WTC11 (cell line): ENCODE measurements at regions of chr1 and their contacts with region 1.

Region 1: GRCh38 chr1:9196129-9197040 is 38.2 kb upstream of the H6PD start:
- DNase-seq: peak; percentile 75
- ATAC-seq: peak; percentile 48
- H3K4me3 Mint-ChIP-seq: no peak overlapping the region
- H3K27ac Mint-ChIP-seq: no peak overlapping the region
- H3K4me1 Mint-ChIP-seq: peaks cover 16% of the 10 kb centered on the region
- H3K27me3 Mint-ChIP-seq: peaks cover 48% of the 10 kb centered on the region
- CTCF ChIP-seq: peak; percentile 40; the same call in 1 of the 2 replicates

Region 2: DNA sequence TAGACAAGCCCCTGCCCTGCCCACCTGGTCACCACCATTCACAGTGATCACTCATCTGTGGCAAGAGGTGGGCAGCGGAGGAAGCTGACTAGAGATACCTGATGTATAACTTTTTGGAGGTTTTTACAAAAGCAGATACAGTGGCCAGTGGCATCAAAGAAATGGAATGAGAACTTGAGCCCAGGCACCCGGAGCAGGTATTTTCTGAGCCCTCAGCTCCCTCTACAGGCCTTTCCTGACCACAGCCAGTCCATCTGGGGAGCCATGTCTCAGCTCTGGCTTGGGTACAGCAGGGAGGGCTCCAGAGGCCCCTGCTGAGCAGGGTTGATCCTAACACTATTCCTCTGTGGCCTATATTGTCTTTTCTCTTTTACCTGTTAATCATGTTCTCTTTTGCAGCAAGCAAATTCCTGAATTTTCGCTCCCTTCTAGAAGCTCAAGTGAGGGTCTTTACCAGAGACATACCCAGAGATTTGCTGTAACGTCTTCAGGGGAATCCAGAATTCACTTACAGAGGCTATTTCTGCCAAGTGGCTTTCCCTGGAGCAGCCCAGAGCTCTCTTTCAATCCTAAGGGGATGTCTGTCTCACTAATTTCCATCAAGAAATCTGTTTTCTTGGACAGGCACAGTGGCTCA is 94.8 kb before region 1 on chr1:
- CTCF ChIA-PET with region 1: interaction called, 11 read pairs
- POLR2A ChIA-PET with region 1: no interaction called
- DNase-seq: peak; percentile 68
- ATAC-seq: peak; percentile 96
- H3K4me3 Mint-ChIP-seq: no peak overlapping the region
- H3K27ac Mint-ChIP-seq: no peak overlapping the region
- H3K4me1 Mint-ChIP-seq: peaks cover 5% of the 10 kb centered on the region; the same call in 1 of the 2 replicates
- H3K27me3 Mint-ChIP-seq: no peaks in the 10 kb centered on the region; the same call in 1 of the 2 replicates
- CTCF ChIP-seq: peak; percentile 50; the same call in 1 of the 2 replicates

Region 3: DNA sequence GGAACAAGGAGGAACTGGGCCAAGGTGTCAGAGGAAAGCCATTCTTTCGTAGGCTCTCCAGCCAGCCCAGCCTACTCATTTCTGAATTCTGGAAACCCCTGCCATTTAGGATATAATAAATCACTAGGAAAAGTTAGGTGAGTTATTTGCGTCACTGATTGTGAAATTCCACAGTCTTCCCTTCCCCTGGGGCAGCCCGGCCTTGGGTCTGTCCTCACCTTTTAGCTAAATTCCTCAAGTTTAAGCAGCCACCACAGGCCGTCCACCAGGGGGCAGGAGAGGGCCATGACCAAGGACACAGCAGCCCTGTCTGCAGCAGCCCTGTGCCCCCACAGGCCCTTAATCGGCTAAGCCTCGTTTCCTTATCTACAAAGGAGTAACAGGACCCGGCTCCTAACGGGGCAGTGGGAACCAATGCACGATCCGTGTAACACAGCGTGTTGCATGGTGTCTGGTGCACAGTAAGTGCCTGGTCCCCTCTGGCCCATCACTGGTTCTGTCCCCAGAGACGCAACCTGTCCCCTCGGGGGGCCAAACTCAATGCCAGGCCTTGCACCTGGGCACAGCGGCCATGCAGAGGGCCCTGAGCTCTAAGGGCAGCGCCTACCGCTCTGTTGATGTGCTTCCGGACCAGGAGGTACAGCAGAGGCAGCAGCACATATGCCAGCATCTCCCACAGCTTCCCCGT is 85.6 kb before region 1 on chr1:
- CTCF ChIA-PET with region 1: interaction called, 31 read pairs
- POLR2A ChIA-PET with region 1: no interaction called
- DNase-seq: peak; percentile 98
- ATAC-seq: peak; percentile 96
- H3K4me3 Mint-ChIP-seq: no peak overlapping the region
- H3K27ac Mint-ChIP-seq: no peak overlapping the region
- H3K4me1 Mint-ChIP-seq: no peaks in the 10 kb centered on the region
- H3K27me3 Mint-ChIP-seq: no peaks in the 10 kb centered on the region
- CTCF ChIP-seq: peak; percentile 94

Region 4: DNA sequence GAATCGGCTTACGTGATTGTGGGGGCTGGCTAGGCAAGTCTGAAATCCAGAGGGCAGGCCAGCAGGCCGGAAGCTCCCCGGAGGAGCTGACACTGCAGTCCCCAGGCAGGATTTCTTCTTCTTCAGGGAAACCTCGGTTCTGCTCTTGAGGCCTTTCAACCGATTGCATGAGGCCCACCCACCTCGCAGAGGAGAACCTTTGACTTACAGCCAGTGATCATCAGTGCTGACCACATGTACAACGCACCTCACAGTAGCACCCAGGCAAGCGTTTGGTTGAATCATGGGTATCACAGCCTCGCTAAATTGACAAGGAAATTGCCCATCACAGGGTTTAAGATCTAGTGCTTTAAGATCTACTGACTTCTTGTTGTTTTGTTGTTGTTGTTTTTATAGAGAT is 43.9 kb before region 1 on chr1:
- CTCF ChIA-PET with region 1: no interaction called
- POLR2A ChIA-PET with region 1: no interaction called
- DNase-seq: no peak
- ATAC-seq: no peak
- H3K4me3 Mint-ChIP-seq: no peak overlapping the region
- H3K27ac Mint-ChIP-seq: peak overlapping the region; percentile 53
- H3K4me1 Mint-ChIP-seq: no peaks in the 10 kb centered on the region; the same call in 1 of the 2 replicates
- H3K27me3 Mint-ChIP-seq: no peaks in the 10 kb centered on the region
- CTCF ChIP-seq: no peak

Region 5: DNA sequence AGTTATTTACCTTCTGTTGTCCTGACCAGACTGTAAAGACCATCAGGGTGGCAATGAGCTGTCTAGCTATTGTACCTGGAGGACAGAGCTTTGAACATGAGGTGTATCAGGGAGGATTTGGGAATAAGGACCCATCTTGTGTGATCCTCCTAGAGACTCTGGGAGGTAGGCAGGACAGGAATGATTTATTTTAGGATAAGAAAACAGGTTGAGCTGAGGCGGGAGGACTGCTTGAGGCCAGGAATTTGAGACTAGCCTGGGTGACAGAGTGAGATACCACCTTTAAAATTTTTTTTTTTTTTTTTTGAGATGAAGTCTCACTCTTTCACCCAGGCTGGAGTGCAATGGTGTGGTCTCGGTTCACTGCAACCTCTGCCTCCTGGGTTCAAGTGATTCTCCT is 20.8 kb before region 1 on chr1:
- CTCF ChIA-PET with region 1: interaction called, 32 read pairs
- POLR2A ChIA-PET with region 1: no interaction called
- DNase-seq: no peak
- ATAC-seq: no peak
- H3K4me3 Mint-ChIP-seq: no peak overlapping the region
- H3K27ac Mint-ChIP-seq: peak overlapping the region; percentile 36; the same call in 1 of the 2 replicates
- H3K4me1 Mint-ChIP-seq: peaks cover 28% of the 10 kb centered on the region
- H3K27me3 Mint-ChIP-seq: no peaks in the 10 kb centered on the region; the same call in 1 of the 2 replicates
- CTCF ChIP-seq: no peak

Region 6: GRCh38 chr1:9181176-9181906 is 15.0 kb before region 1 on chr1:
- CTCF ChIA-PET with region 1: interaction called, 32 read pairs
- POLR2A ChIA-PET with region 1: interaction called, 4 read pairs
- DNase-seq: peak; percentile 89
- ATAC-seq: peak; percentile 74
- H3K4me3 Mint-ChIP-seq: peak overlapping the region; percentile 90
- H3K27ac Mint-ChIP-seq: peak overlapping the region; percentile 95
- H3K4me1 Mint-ChIP-seq: peaks cover 48% of the 10 kb centered on the region
- H3K27me3 Mint-ChIP-seq: peaks cover 14% of the 10 kb centered on the region
- CTCF ChIP-seq: peak; percentile 96

Region 7: GRCh38 chr1:9234223-9235095 is 38.1 kb after region 1 on chr1 and contains the start of gene H6PD:
- CTCF ChIA-PET with region 1: interaction called, 11 read pairs
- POLR2A ChIA-PET with region 1: no interaction called
- DNase-seq: peak; percentile 76
- ATAC-seq: peak; percentile 82
- H3K4me3 Mint-ChIP-seq: peak within 1 kb of the TSS; percentile 85
- H3K27ac Mint-ChIP-seq: peak within 1 kb of the TSS; percentile 72
- H3K4me1 Mint-ChIP-seq: peaks cover 15% of the 10 kb centered on the region
- H3K27me3 Mint-ChIP-seq: peaks cover 2% of the 10 kb centered on the region; the same call in 1 of the 2 replicates
- CTCF ChIP-seq: no peak
- total RNA-seq, gene H6PD: 7.4 to 7.9 TPM (median 7.8 TPM) in 3 replicates

Region 8: DNA sequence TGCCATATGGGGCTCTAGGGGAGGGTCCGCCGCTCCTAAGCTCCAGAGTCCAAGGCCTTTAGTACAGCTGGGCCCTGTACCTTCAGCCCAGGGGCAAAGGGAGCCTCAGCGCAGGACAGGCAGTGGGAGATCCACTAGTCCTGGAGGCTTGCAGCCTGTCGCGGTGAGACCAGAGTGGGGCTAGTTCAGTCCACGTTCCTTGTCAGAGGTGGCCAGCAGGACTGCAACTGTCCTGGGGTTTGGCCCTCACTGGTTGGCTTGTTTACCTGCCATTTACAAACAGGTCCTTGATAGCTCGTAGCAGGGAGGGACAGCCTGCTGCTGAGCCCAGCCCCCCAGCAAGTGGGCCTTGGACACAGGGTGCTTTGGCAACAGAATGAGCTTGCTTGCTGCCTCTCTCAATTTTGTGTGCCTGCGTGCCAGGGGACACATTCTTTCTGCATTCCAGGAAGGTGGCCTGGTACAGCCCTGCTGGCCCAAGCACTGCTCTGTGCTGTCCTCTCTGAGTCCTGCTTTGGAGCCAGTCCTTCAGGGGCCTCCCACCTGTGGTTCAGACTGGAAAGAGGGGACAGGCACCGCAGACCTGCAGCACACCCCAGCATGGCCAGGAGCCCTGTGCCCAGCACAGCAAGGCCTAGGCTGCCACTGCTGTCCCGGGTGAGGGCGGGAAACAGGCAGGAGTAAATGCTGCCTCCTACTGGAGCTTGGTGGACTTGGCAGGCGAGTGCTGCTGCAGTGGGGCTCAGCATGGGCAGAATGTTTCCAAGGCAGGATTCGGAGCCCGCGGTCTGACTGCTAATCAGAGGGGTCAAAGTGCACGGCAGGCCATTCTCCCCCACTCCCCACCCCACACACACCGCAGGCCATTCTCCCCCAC is 53.4 kb after region 1 on chr1:
- CTCF ChIA-PET with region 1: interaction called, 40 read pairs
- POLR2A ChIA-PET with region 1: no interaction called
- DNase-seq: peak; percentile 80
- ATAC-seq: peak; percentile 80
- H3K4me3 Mint-ChIP-seq: no peak overlapping the region
- H3K27ac Mint-ChIP-seq: no peak overlapping the region
- H3K4me1 Mint-ChIP-seq: peaks cover 42% of the 10 kb centered on the region
- H3K27me3 Mint-ChIP-seq: no peaks in the 10 kb centered on the region
- CTCF ChIP-seq: peak; percentile 72